Mammary epithelial cell (primary cell): ENCODE measurements at regions of chr4 and their contacts with region 1.

Region 1: GRCh38 chr4:142840516-142841123 is 5.5 kb downstream of the INPP4B start:
- DNase-seq: no peak
- H3K4me3 ChIP-seq: no peak overlapping the region
- H3K27ac ChIP-seq: no peak overlapping the region
- H3K4me1 ChIP-seq: peaks cover 4% of the 10 kb centered on the region
- H3K27me3 ChIP-seq: no peaks in the 10 kb centered on the region
- CTCF ChIP-seq: peak; percentile 57 to 66

Region 2: GRCh38 chr4:142752202-142752786 is 88.3 kb before region 1 on chr4:
- CTCF ChIA-PET with region 1: no interaction called
- dilution Hi-C with region 1: loop called (anchors 5 kb)
- in situ Hi-C with region 1: no loop called
- intact Hi-C with region 1: no loop called
- DNase-seq: no peak
- H3K4me3 ChIP-seq: no peak overlapping the region
- H3K27ac ChIP-seq: no peak overlapping the region
- H3K4me1 ChIP-seq: no peaks in the 10 kb centered on the region
- H3K27me3 ChIP-seq: no peaks in the 10 kb centered on the region
- CTCF ChIP-seq: no peak